ENCODE measurements at regions of chr5 and their contacts with region 1.

Region 1: DNA sequence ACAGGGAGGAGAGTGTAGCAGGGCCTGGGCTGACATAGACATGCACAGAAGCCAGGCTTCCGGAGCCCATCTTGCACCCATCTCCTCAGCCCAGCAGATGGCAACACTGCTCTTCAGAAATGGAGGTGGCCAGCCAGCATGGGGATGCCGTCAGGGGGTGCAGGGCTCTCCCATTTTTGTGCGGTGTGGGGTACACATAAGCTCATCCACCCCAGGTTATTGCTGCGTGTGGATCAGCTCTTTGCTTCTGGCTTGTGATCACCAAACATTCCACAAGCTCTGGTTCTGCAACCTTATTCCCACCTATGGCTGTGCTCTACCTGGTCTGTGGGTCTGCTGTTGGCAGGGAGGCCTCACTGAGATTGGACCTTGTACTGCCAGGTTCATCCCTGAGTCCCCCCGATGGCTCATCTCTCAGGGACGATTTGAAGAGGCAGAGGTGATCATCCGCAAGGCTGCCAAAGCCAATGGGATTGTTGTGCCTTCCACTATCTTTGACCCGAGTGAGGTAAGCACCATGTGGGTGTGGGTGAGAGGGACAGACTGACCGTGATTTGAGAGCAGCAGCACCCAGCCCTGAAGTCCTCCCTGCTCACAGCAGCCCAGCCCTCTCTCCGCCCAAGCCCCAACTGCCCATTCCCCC is 17.3 kb downstream of the SLC22A5 start:
- DNase-seq: peak; percentile 78 to 92
- H3K4me3 ChIP-seq: peak overlapping the region in 1 of 4 donors; percentile 6
- H3K27ac ChIP-seq: peak overlapping the region; percentile 55 to 96 (median 91)
- H3K4me1 ChIP-seq: peaks cover 60 to 79% (median 68%) of the 10 kb centered on the region in 4 donors
- H3K27me3 ChIP-seq: no peaks in the 10 kb centered on the region
- CTCF ChIP-seq: peak in 5 of 7 experiments; percentile 75 to 90 (median 78)
- EP300 ChIP-seq: no peak
- POLR2A ChIP-seq: no peak

Region 2: DNA sequence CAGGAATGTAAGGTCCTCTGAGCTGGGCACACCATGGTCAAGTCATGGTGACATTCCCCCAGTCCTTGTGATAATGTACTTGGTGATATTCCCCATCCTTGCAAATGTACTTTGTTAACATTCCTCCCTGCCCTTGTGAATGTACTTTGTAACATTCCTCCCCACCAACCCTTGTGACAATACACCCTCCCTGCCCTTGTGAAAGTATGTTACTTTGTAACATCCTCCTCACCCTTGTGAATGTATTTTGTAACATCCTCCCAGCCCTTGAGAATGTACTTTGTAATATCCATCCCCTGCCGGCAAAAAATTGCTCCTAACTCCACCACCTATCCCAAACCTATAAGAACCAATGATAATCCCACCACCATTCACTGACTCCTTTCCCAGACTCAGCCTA is 805.1 kb before region 1 on chr5:
- intact Hi-C with region 1: no loop called
- DNase-seq: no peak
- H3K4me3 ChIP-seq: no peak overlapping the region
- H3K27ac ChIP-seq: no peak overlapping the region
- H3K4me1 ChIP-seq: peaks cover 0 to 9% (median 0%) of the 10 kb centered on the region in 4 donors
- H3K27me3 ChIP-seq: no peaks in the 10 kb centered on the region
- CTCF ChIP-seq: no peak
- EP300 ChIP-seq: no peak
- POLR2A ChIP-seq: no peak

Region 3: GRCh38 chr5:132487841-132488555 is 101.2 kb after region 1 on chr5:
- intact Hi-C with region 1: no loop called
- DNase-seq: peak in 1 of 2 donors; percentile 25
- H3K4me3 ChIP-seq: peak overlapping the region in 3 of 4 donors; percentile 87 to 96 (median 91)
- H3K27ac ChIP-seq: peak overlapping the region; percentile 43 to 97 (median 94)
- H3K4me1 ChIP-seq: peaks cover 52 to 87% (median 75%) of the 10 kb centered on the region in 4 donors
- H3K27me3 ChIP-seq: no peaks in the 10 kb centered on the region
- CTCF ChIP-seq: no peak
- EP300 ChIP-seq: no peak
- POLR2A ChIP-seq: no peak

Region 4: DNA sequence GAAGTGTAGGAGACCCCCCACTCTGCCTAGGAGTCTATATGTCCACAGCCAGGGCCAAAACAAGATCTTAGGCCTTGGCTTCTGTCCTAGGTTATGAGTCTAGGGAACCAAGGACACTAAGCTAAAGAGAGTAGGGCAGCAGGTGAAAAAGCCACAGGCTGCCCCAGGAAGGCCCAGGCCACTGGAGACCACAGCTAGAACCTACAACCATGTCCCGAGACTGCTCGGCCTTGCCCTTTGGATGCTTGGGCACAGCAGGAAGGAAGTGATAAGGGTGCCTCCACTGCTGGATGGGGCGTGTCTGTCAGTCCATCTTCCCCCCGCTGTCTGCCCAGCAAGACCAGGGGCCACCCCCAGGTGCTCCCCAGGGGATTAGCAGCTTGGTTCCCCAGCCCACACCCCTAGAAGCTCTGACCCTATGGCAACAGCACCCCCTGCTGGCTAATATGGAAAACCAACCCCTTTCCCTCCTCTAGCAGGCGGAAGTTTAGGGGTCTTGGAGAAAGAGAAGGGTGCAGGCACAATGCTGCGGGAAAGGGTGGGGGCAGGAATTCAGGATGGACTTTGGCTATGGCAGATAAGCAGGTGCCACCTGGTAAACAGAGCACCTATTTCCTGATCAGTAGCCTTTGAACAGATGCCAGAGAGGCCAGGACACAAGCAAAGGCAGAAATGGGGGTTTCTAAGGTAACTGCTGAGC is 114.3 kb after region 1 on chr5:
- intact Hi-C with region 1: loop called (anchors 10 kb)
- DNase-seq: peak; percentile 73 to 91
- H3K4me3 ChIP-seq: no peak overlapping the region
- H3K27ac ChIP-seq: peak overlapping the region; percentile 91 to 100 (median 97)
- H3K4me1 ChIP-seq: peaks cover 64 to 83% (median 82%) of the 10 kb centered on the region in 4 donors
- H3K27me3 ChIP-seq: no peaks in the 10 kb centered on the region
- CTCF ChIP-seq: peak in 6 of 7 experiments; percentile 24 to 96 (median 88)
- EP300 ChIP-seq: no peak
- POLR2A ChIP-seq: no peak

Region 5: DNA sequence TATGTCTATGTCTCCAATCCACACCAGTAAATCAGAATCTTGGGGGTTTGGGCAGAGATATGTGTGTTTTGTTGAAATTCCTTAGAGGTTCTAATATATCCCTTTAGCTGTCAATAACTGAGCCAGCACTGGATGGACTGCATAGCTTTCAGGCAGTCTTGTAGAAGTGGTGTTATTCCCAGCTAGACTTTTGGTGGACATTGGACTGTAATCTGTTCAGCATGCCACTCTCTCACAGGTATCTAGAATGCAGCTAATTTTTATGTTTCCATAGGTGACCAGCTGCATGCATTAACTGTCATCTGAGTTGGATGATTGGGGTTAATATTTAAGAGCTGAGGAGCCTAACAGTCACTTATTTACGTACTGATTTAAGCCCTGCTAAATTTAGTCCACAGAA is 226.1 kb after region 1 on chr5:
- intact Hi-C with region 1: no loop called
- DNase-seq: no peak
- H3K4me3 ChIP-seq: no peak overlapping the region
- H3K27ac ChIP-seq: no peak overlapping the region
- H3K4me1 ChIP-seq: peaks cover 0 to 7% (median 0%) of the 10 kb centered on the region in 4 donors
- H3K27me3 ChIP-seq: no peaks in the 10 kb centered on the region
- CTCF ChIP-seq: no peak
- EP300 ChIP-seq: no peak
- POLR2A ChIP-seq: no peak

Measured in stomach (tissue), 19 donors.